ENCODE measurements at regions of chr4 and their contacts with region 1.

Region 1: DNA sequence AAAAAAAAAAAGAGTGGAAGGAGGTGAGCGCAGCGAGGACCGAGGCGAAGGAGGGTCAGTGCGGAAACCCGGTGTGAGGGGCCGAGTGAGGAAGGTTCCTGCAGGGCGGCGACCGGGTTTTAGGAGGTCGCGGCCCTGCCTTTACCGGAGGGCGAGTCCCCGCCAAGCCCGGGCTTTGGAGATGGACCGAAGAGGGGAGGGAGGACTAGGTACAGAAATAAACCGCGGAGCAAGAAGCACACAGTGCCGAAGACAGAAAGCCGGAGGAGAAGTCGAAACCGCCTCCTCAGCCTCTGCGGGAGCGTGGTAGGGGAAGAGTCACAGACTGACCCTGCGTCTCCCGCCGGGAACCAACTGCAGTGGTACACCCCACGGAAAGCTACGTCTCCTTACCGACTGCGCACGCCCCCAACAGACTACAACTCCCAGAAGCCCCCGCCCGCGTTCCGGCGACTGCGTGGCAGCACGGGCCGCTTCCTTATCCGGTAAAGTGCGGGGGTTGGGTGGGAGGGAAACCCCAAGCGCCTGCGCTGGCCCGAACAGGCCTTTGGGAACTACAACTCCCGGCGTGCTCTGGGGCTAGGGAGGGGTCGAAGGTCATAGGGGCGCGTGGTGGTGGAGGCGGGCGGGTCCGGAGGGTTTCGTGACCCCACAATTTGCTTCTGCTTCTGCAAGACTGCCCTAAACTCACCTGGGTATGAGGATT is at the start of gene NFXL1:
- DNase-seq: peak; percentile 90 to 95 (median 93)
- ATAC-seq: peak; percentile 98
- H3K4me3 ChIP-seq: peak within 1 kb of the TSS; percentile 92
- H3K4me3 Mint-ChIP-seq: peak within 1 kb of the TSS; percentile 93 to 99 (median 96)
- H3K27ac ChIP-seq: peak within 1 kb of the TSS; percentile 88
- H3K27ac Mint-ChIP-seq: peak within 1 kb of the TSS; percentile 89 to 98 (median 96)
- H3K4me1 ChIP-seq: peaks cover 12 to 15% of the 10 kb centered on the region in 2 donors
- H3K4me1 Mint-ChIP-seq: peaks cover 18 to 41% (median 32%) of the 10 kb centered on the region in 7 donors
- H3K27me3 ChIP-seq: no peaks in the 10 kb centered on the region
- H3K27me3 Mint-ChIP-seq: no peaks in the 10 kb centered on the region
- total RNA-seq, gene NFXL1: 10.4 to 19.3 (median 13.2) TPM

Region 2: GRCh38 chr4:47485047-47485692 is 429.2 kb before region 1 on chr4 and contains the start of gene ATP10D:
- CTCF ChIA-PET with region 1: no interaction called
- POLR2A ChIA-PET with region 1: interaction called, 3 read pairs
- intact Hi-C with region 1: loop called in 1 of 2 experiments (anchors 5 kb)
- DNase-seq: peak; percentile 56 to 77 (median 66)
- ATAC-seq: peak; percentile 97
- H3K4me3 ChIP-seq: peak within 1 kb of the TSS; percentile 75
- H3K4me3 Mint-ChIP-seq: peak within 1 kb of the TSS; percentile 87 to 98 (median 94)
- H3K27ac ChIP-seq: peak within 1 kb of the TSS; percentile 70
- H3K27ac Mint-ChIP-seq: peak within 1 kb of the TSS; percentile 78 to 97 (median 89)
- H3K4me1 ChIP-seq: peaks cover 7 to 9% of the 10 kb centered on the region in 2 donors
- H3K4me1 Mint-ChIP-seq: peaks cover 15 to 36% (median 26%) of the 10 kb centered on the region in 7 donors
- H3K27me3 ChIP-seq: no peaks in the 10 kb centered on the region
- H3K27me3 Mint-ChIP-seq: peaks cover 0 to 5% (median 0%) of the 10 kb centered on the region in 5 donors
- total RNA-seq, gene ATP10D: 3.3 to 29.0 (median 6.1) TPM

Region 3: GRCh38 chr4:48016141-48017103 is 102.0 kb after region 1 on chr4 and contains the starts of genes CNGA1 and NIPAL1:
- CTCF ChIA-PET with region 1: no interaction called
- POLR2A ChIA-PET with region 1: no interaction called
- intact Hi-C with region 1: loop called (anchors 1 to 5 kb)
- DNase-seq: peak; percentile 56 to 79 (median 65)
- ATAC-seq: peak; percentile 96
- H3K4me3 ChIP-seq: peak within 1 kb of the TSS; percentile 75
- H3K4me3 Mint-ChIP-seq: peak within 1 kb of the TSS; percentile 78 to 95 (median 86)
- H3K27ac ChIP-seq: peak within 1 kb of the TSS; percentile 17
- H3K27ac Mint-ChIP-seq: peak within 1 kb of the TSS in 5 of 9 donors; percentile 7 to 91 (median 50)
- H3K4me1 ChIP-seq: peaks cover 0 to 8% of the 10 kb centered on the region in 2 donors
- H3K4me1 Mint-ChIP-seq: peaks cover 6 to 12% (median 10%) of the 10 kb centered on the region in 7 donors
- H3K27me3 ChIP-seq: no peaks in the 10 kb centered on the region
- H3K27me3 Mint-ChIP-seq: peaks cover 3 to 32% (median 11%) of the 10 kb centered on the region in 5 donors
- total RNA-seq, gene CNGA1: not detected
- total RNA-seq, gene NIPAL1: 0.45 to 3.3 (median 1.9) TPM in 4 of 5 experiments, not detected in the other

Region 4: GRCh38 chr4:48127682-48128394 is 213.5 kb after region 1 on chr4:
- CTCF ChIA-PET with region 1: interaction called, 3 read pairs
- POLR2A ChIA-PET with region 1: interaction called, 3 read pairs
- intact Hi-C with region 1: loop called in 1 of 2 experiments (anchors 2 kb)
- DNase-seq: peak; percentile 30 to 78 (median 71)
- ATAC-seq: peak; percentile 82
- H3K4me3 ChIP-seq: peak overlapping the region; percentile 52
- H3K4me3 Mint-ChIP-seq: peak overlapping the region in 9 of 10 donors; percentile 80 to 99 (median 91)
- H3K27ac ChIP-seq: peak overlapping the region; percentile 79
- H3K27ac Mint-ChIP-seq: peak overlapping the region in 7 of 9 donors; percentile 89 to 97 (median 95)
- H3K4me1 ChIP-seq: peaks cover 32 to 81% of the 10 kb centered on the region in 2 donors
- H3K4me1 Mint-ChIP-seq: peaks cover 0 to 89% (median 84%) of the 10 kb centered on the region in 7 donors
- H3K27me3 ChIP-seq: no peaks in the 10 kb centered on the region
- H3K27me3 Mint-ChIP-seq: no peaks in the 10 kb centered on the region

Region 5: DNA sequence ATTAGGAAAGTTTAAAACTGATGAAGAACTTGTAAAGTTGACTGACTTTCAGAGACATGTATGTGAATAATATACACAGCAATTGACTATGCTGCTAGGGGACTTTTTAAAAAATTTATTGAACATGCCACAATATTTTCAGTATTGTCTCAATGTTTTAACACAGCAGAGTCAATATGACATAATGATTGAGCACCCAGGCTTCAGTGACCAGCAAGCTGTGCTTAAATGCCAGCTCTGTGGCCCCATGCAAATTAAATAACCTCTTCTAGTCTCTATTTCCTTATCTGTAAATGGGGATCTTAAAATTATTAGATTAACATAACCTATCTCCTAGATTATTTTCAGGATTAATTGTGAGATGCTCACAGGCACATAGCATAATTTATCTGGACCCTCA is 276.5 kb after region 1 on chr4:
- CTCF ChIA-PET with region 1: no interaction called
- POLR2A ChIA-PET with region 1: no interaction called
- intact Hi-C with region 1: no loop called
- DNase-seq: no peak
- ATAC-seq: no peak
- H3K4me3 ChIP-seq: no peak overlapping the region
- H3K4me3 Mint-ChIP-seq: no peak overlapping the region
- H3K27ac ChIP-seq: no peak overlapping the region
- H3K27ac Mint-ChIP-seq: no peak overlapping the region
- H3K4me1 ChIP-seq: no peaks in the 10 kb centered on the region
- H3K4me1 Mint-ChIP-seq: peaks cover 0 to 9% (median 0%) of the 10 kb centered on the region in 7 donors
- H3K27me3 ChIP-seq: no peaks in the 10 kb centered on the region
- H3K27me3 Mint-ChIP-seq: no peaks in the 10 kb centered on the region

Region 6: GRCh38 chr4:48269861-48270522 is 355.6 kb after region 1 on chr4:
- CTCF ChIA-PET with region 1: no interaction called
- POLR2A ChIA-PET with region 1: no interaction called
- intact Hi-C with region 1: loop called (anchors 1 to 5 kb)
- DNase-seq: peak; percentile 48 to 88 (median 69)
- ATAC-seq: peak; percentile 95
- H3K4me3 ChIP-seq: peak overlapping the region; percentile 88
- H3K4me3 Mint-ChIP-seq: peak overlapping the region; percentile 95 to 98 (median 97)
- H3K27ac ChIP-seq: peak overlapping the region; percentile 73
- H3K27ac Mint-ChIP-seq: peak overlapping the region; percentile 20 to 94 (median 86)
- H3K4me1 ChIP-seq: peaks cover 0 to 6% of the 10 kb centered on the region in 2 donors
- H3K4me1 Mint-ChIP-seq: peaks cover 6 to 28% (median 22%) of the 10 kb centered on the region in 7 donors
- H3K27me3 ChIP-seq: no peaks in the 10 kb centered on the region
- H3K27me3 Mint-ChIP-seq: no peaks in the 10 kb centered on the region

Region 7: DNA sequence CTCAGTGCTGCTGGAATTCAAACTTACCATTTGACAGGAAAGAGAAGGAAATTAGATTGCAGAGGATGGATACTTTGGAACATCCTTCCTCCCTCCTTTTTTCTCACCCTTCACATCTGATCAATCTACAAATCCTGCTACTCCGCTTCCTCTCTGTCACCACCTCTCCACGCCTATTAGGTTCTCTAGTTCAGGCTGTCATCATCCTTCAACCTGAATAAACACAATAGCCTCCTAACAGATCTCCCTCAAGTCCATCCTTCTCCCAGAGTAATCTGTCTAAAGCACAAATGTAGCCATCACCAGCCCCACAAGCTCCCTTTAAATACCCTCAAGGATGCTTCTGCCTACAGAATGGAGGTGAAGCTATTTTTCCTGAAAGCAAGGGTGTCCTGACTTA is 406.9 kb after region 1 on chr4:
- CTCF ChIA-PET with region 1: no interaction called
- POLR2A ChIA-PET with region 1: no interaction called
- intact Hi-C with region 1: no loop called
- DNase-seq: no peak
- ATAC-seq: no peak
- H3K4me3 ChIP-seq: no peak overlapping the region
- H3K4me3 Mint-ChIP-seq: no peak overlapping the region
- H3K27ac ChIP-seq: no peak overlapping the region
- H3K27ac Mint-ChIP-seq: peak overlapping the region in 1 of 9 donors; percentile 3
- H3K4me1 ChIP-seq: no peaks in the 10 kb centered on the region
- H3K4me1 Mint-ChIP-seq: no peaks in the 10 kb centered on the region
- H3K27me3 ChIP-seq: no peaks in the 10 kb centered on the region
- H3K27me3 Mint-ChIP-seq: peaks cover 0 to 5% (median 0%) of the 10 kb centered on the region in 5 donors

Region 8: GRCh38 chr4:48906206-48907173 is 992.1 kb after region 1 on chr4 and contains the start of gene OCIAD2:
- CTCF ChIA-PET with region 1: no interaction called
- POLR2A ChIA-PET with region 1: no interaction called
- intact Hi-C with region 1: loop called (anchors 1 to 5 kb)
- DNase-seq: peak; percentile 59 to 88 (median 86)
- ATAC-seq: peak; percentile 97
- H3K4me3 ChIP-seq: peak within 1 kb of the TSS; percentile 80
- H3K4me3 Mint-ChIP-seq: peak within 1 kb of the TSS; percentile 93 to 99 (median 97)
- H3K27ac ChIP-seq: peak within 1 kb of the TSS; percentile 82
- H3K27ac Mint-ChIP-seq: peak within 1 kb of the TSS; percentile 89 to 99 (median 96)
- H3K4me1 ChIP-seq: peaks cover 18 to 33% of the 10 kb centered on the region in 2 donors
- H3K4me1 Mint-ChIP-seq: peaks cover 32 to 63% (median 52%) of the 10 kb centered on the region in 7 donors
- H3K27me3 ChIP-seq: no peaks in the 10 kb centered on the region
- H3K27me3 Mint-ChIP-seq: no peaks in the 10 kb centered on the region
- total RNA-seq, gene OCIAD2: 42.0 to 142 (median 97.5) TPM